ENCODE measurements at regions of chr11 and their contacts with region 1.

Region 1: GRCh38 chr11:38791302-38791961 is 2193.4 kb upstream of the RAG2 start:
- DNase-seq: peak; percentile 55 to 76
- H3K4me3 ChIP-seq: no peak overlapping the region
- H3K4me3 Mint-ChIP-seq: no peak overlapping the region
- H3K27ac Mint-ChIP-seq: no peak overlapping the region
- H3K4me1 ChIP-seq: peaks cover 8% of the 10 kb centered on the region
- H3K4me1 Mint-ChIP-seq: no peaks in the 10 kb centered on the region
- H3K27me3 ChIP-seq: no peaks in the 10 kb centered on the region
- H3K27me3 Mint-ChIP-seq: no peaks in the 10 kb centered on the region
- CTCF ChIP-seq: peak; percentile 79 to 80

Region 2: DNA sequence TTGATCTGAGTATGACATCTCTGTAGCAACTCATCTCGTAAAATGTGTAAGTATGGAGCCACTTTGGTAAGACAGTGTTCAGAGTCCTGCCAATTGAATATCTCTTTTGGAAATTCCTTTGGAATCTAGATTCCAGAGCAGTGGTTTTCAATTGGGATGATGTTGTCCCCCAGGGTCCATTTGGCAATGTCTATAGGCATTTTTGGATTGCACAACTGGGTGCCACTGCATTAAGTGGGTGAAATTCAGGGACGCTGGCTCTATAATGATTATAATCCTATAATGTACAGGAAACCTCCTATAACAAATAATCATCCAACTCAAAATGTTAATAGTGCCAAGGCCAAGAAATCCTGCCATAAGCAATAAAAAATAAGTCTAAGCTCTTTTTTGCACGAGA is 1788.6 kb before region 1 on chr11:
- CTCF ChIA-PET with region 1: no interaction called
- POLR2A ChIA-PET with region 1: no interaction called
- intact Hi-C with region 1: loop called (anchors 2 kb)
- DNase-seq: no peak
- H3K4me3 ChIP-seq: no peak overlapping the region
- H3K4me3 Mint-ChIP-seq: no peak overlapping the region
- H3K27ac Mint-ChIP-seq: no peak overlapping the region
- H3K4me1 ChIP-seq: no peaks in the 10 kb centered on the region
- H3K4me1 Mint-ChIP-seq: no peaks in the 10 kb centered on the region
- H3K27me3 ChIP-seq: no peaks in the 10 kb centered on the region
- H3K27me3 Mint-ChIP-seq: no peaks in the 10 kb centered on the region
- CTCF ChIP-seq: no peak

Region 3: DNA sequence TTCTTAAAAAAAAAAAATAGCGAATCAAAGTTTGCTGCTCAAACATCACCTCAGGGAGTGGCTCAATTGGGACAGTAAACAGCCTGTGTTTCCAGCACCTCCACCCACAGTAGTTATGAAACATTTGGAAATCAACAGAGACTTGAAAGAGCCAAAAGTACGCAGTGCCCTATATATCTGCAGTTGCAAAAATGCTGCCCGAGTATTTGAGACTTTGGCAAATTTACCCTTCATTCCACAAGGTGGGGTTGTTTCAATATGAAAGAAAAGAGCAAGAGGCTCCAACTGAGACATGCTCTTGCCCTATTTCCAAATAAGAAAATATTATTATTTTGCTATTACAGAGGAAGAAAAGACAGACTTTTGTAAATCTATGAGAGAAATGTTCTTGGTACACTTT is 1342.3 kb before region 1 on chr11:
- CTCF ChIA-PET with region 1: no interaction called
- POLR2A ChIA-PET with region 1: no interaction called
- intact Hi-C with region 1: loop called (anchors 1 kb)
- DNase-seq: peak in 1 of 2 experiments; percentile 47
- H3K4me3 ChIP-seq: no peak overlapping the region
- H3K4me3 Mint-ChIP-seq: no peak overlapping the region
- H3K27ac Mint-ChIP-seq: no peak overlapping the region
- H3K4me1 ChIP-seq: peaks cover 13% of the 10 kb centered on the region
- H3K4me1 Mint-ChIP-seq: no peaks in the 10 kb centered on the region
- H3K27me3 ChIP-seq: no peaks in the 10 kb centered on the region
- H3K27me3 Mint-ChIP-seq: no peaks in the 10 kb centered on the region
- CTCF ChIP-seq: peak in 1 of 2 experiments; percentile 50

Region 4: GRCh38 chr11:37946155-37946766 is 845.2 kb before region 1 on chr11:
- CTCF ChIA-PET with region 1: no interaction called
- POLR2A ChIA-PET with region 1: no interaction called
- intact Hi-C with region 1: loop called (anchors 1 kb)
- DNase-seq: peak in 1 of 2 experiments; percentile 51
- H3K4me3 ChIP-seq: no peak overlapping the region
- H3K4me3 Mint-ChIP-seq: no peak overlapping the region
- H3K27ac Mint-ChIP-seq: no peak overlapping the region
- H3K4me1 ChIP-seq: no peaks in the 10 kb centered on the region
- H3K4me1 Mint-ChIP-seq: no peaks in the 10 kb centered on the region
- H3K27me3 ChIP-seq: no peaks in the 10 kb centered on the region
- H3K27me3 Mint-ChIP-seq: no peaks in the 10 kb centered on the region
- CTCF ChIP-seq: peak; percentile 45 to 54

Region 5: GRCh38 chr11:40293655-40294348 is 1502.4 kb after region 1 on chr11:
- CTCF ChIA-PET with region 1: no interaction called
- POLR2A ChIA-PET with region 1: no interaction called
- intact Hi-C with region 1: loop called (anchors 5 kb)
- DNase-seq: peak; percentile 63 to 78
- H3K4me3 ChIP-seq: peak overlapping the region; percentile 43
- H3K4me3 Mint-ChIP-seq: peak overlapping the region; percentile 78
- H3K27ac Mint-ChIP-seq: no peak overlapping the region
- H3K4me1 ChIP-seq: no peaks in the 10 kb centered on the region
- H3K4me1 Mint-ChIP-seq: peaks cover 10% of the 10 kb centered on the region
- H3K27me3 ChIP-seq: no peaks in the 10 kb centered on the region; the same call in 1 of the 2 replicates
- H3K27me3 Mint-ChIP-seq: peaks cover 12% of the 10 kb centered on the region
- CTCF ChIP-seq: peak; percentile 89 to 93